Activated CD4-positive, alpha-beta T cell treated with anti-CD3 and anti-CD28 coated beads, Interleukin-2, amount 10 ng/mL, durations not matched to agents 24 days and 14 days (primary cell): ENCODE measurements at regions of chr3 and their contacts with region 1.

Region 1: DNA sequence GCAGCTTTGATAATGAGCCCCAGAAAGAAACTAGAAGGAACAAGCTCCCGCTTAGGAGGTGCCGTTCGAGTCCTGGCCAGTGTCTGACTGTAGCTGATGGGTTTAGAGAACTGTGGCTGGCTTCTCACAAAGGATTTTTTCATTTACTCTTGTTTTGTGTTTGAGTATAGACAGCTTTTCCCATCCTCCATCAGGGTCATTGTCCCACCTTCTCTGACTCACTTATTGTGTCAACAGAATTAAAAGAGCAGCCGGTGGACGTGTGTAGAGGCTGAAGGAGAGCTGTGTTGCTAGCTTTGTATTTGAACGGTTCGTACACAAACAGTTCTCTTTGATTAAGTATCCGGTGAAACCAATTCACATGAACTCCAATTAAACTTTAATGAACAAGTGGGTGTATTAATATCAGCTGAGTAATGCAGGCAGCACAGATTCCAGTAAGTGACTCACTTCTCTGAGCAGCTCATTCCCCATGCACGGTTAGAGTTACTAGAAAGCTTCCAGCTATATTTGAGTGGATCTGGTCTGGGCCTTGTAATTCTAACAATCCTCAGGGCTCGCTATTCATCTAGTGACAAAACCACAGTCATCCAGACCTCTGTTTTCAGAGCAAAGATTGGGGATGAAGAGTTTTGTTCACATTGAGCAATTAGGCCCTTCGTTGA is 141.0 kb downstream of the LPP start:
- DNase-seq: no peak
- H3K4me3 Mint-ChIP-seq: no peak overlapping the region
- H3K27ac Mint-ChIP-seq: no peak overlapping the region
- H3K4me1 Mint-ChIP-seq: peaks cover 71% of the 10 kb centered on the region
- H3K27me3 Mint-ChIP-seq: no peaks in the 10 kb centered on the region

Region 2: GRCh38 chr3:187679638-187680396 is 615.1 kb before region 1 on chr3:
- intact Hi-C with region 1: no loop called
- DNase-seq: peak; percentile 90
- H3K4me3 Mint-ChIP-seq: no peak overlapping the region
- H3K27ac Mint-ChIP-seq: no peak overlapping the region
- H3K4me1 Mint-ChIP-seq: peaks cover 7% of the 10 kb centered on the region
- H3K27me3 Mint-ChIP-seq: peaks cover 41% of the 10 kb centered on the region

Region 3: DNA sequence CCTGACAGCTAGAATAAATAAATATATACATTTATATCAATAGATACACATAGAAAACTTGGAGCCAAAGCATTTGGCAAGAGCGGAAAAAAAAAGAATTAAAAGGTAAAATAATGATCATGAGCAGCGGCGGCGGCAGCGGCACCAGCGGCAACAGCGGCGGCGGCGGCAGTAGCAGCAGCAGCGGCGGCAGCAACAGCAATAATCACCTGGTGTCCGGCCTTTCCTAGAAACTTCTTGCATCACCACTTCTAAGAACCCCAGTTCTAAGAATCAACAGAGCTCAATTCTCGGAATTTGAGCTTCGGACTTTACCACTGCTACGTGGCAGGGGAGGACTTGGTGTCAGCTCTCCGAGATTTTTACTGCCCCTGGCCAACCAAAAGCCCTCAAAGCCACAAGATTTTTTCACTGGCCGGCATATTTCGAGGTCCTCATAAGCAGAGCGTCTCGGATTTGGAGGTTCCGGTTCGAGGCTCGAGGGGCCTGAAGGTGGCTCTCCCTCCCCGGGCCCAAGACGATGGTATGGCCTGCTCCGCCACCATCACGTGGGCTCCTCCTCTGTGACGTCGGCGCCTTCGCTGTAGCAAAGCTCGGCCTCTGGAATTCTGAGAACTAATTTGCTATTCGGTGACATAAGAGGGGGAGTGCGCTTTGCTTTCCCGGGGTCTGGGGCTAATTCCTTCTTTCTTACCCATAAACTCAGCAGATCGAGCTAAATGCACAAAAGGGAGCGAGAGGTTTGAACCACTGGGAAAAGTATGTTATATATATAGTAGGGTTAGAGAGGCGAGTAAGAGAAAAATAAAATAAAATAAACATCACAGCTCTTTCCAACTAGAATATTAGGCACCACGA is 549.5 kb before region 1 on chr3 and contains the start of gene BCL6:
- intact Hi-C with region 1: loop called (anchors 1 kb)
- DNase-seq: peak; percentile 97
- H3K4me3 Mint-ChIP-seq: peak within 1 kb of the TSS; percentile 98
- H3K27ac Mint-ChIP-seq: peak within 1 kb of the TSS; percentile 99
- H3K4me1 Mint-ChIP-seq: peaks cover 61% of the 10 kb centered on the region
- H3K27me3 Mint-ChIP-seq: no peaks in the 10 kb centered on the region
- total RNA-seq, gene BCL6: 41.7 and 51.7 TPM in 2 replicates

Region 4: DNA sequence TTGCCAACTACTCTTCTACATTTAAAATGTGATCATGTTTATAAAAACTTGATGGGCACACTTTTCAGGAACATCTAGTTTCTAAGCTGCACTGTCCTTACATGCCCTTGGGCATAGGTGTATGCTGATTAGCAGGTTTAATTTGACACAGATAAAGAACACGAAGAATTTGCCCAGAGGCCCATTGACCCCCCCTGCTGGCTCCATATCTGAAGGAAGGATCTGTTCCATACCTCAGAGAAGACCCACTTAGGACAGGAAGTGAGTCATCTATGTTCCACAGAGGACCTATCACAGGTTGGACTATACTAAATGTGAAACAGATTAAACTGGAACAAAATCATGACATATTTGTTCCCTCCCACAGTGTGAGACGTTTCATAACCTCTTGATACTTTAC is 233.8 kb before region 1 on chr3:
- intact Hi-C with region 1: loop called (anchors 5 kb)
- DNase-seq: peak; percentile 85
- H3K4me3 Mint-ChIP-seq: peak overlapping the region; percentile 66
- H3K27ac Mint-ChIP-seq: peak overlapping the region; percentile 88
- H3K4me1 Mint-ChIP-seq: peaks cover 32% of the 10 kb centered on the region
- H3K27me3 Mint-ChIP-seq: no peaks in the 10 kb centered on the region

Region 5: DNA sequence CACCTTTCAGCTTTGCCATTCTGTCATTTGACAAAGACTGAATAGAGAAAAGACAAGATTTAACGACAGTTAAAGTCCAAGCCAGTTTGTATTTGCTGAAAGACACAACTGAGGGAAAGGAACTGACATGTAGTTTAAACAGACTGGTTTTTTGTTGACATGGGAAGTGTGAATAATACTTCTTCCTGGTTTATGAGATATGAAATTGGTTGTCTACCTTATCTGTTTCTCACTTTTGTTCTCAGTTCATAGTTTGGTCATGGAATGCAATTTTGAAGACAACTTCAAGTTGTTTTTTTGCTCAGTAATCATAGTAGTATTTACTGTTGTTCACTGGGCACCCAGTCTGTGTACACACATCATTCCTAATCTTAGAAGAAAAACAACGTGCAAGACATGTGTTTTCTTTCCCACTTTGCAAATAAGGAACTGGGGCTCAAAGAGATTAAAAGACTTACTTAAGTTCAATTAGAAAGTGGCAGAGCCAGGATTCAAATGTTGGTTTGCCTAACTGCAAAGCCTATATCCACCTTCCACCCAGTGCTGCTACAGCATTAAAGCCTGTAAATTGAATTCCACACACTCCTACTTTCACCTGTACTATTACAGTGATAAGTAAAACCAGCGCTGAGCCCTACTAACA is 37.5 kb before region 1 on chr3:
- intact Hi-C with region 1: loop called (anchors 1 kb)
- DNase-seq: no peak
- H3K4me3 Mint-ChIP-seq: no peak overlapping the region
- H3K27ac Mint-ChIP-seq: peak overlapping the region; percentile 85
- H3K4me1 Mint-ChIP-seq: peaks cover 47% of the 10 kb centered on the region
- H3K27me3 Mint-ChIP-seq: no peaks in the 10 kb centered on the region

Region 6: GRCh38 chr3:188320757-188321156 is 25.8 kb after region 1 on chr3:
- intact Hi-C with region 1: loop called (anchors 1 kb)
- DNase-seq: no peak
- H3K4me3 Mint-ChIP-seq: no peak overlapping the region
- H3K27ac Mint-ChIP-seq: peak overlapping the region; percentile 29
- H3K4me1 Mint-ChIP-seq: peaks cover 48% of the 10 kb centered on the region
- H3K27me3 Mint-ChIP-seq: peaks cover 4% of the 10 kb centered on the region

Region 7: DNA sequence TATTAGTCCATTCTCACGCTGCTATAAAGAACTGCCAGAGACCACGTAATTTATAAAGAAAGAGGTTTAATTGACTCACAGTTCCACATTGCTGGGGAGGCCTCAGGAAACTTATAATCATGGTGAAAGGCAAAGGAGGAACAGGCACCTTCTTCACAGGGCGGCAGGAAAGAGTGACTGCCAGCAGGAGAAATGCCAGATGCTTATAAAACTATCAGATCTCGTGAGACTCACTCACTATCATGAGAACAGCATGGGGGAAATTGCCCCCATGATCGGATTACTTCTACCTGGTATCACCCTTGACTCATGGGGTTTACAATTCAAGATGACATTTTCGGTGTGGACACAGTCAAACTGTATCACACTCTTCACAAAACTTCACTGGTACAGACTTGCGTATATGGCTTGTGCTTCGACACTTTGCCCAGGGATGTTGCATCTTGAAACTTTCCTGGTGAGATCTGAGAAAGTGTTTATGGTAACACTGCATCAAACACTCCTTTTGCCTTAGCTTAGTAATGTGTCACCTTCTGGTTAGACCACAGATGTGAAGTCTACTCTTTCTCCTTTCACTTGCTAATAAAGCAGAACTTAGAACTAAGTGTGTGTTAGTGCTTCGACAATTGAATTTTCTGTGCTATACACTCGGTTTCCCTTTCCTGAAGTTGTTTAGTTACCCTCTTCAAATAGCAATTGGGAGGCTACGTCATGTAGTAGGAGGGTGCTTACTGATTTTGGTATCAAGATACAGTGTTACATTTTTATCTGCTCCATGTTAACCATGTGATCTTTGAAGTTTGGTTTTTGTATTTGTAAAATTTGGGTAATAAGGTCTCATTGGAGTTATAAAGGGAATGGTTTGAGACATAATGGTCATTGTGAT is 44.7 kb after region 1 on chr3:
- intact Hi-C with region 1: loop called (anchors 2 kb)
- DNase-seq: peak; percentile 81
- H3K4me3 Mint-ChIP-seq: peak overlapping the region; percentile 66
- H3K27ac Mint-ChIP-seq: peak overlapping the region; percentile 93
- H3K4me1 Mint-ChIP-seq: peaks cover 34% of the 10 kb centered on the region
- H3K27me3 Mint-ChIP-seq: peaks cover 6% of the 10 kb centered on the region

Region 8: DNA sequence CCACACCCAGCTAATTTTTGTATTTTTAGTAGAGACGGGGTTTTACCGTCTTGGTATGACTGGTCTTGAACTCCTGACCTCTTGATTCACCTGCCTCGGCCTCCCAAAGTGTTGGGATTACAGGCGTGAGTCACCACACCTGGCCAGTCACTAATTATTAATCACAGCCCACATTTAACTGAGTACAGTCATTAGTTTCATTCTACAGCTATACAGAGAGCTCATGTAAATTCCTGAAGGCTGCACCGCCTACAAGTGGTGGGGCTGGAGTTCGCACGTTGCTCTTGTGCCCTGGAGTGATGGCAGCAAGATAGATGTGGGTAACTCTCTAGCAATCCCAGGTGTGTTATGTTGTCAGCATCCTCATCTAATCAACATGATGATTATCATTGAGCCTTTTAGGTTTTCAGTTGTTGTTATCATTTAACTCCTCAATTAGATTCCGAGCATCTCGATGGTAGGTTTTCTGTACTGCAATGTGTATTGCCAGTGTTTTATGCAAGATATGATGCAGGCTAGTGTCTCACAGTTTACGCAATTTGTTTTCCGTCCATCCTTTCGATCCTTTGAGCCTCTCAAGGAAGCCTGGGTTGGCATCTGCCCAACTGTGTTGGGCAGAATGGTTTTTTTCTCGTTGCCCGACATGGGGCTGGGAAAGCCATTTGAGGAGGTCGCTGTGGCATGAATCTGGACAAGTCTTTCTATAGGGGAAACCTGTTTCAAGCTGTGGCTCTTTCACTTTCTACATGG is 75.3 kb after region 1 on chr3:
- intact Hi-C with region 1: no loop called
- DNase-seq: no peak
- H3K4me3 Mint-ChIP-seq: no peak overlapping the region
- H3K27ac Mint-ChIP-seq: no peak overlapping the region
- H3K4me1 Mint-ChIP-seq: peaks cover 4% of the 10 kb centered on the region
- H3K27me3 Mint-ChIP-seq: no peaks in the 10 kb centered on the region

Region 9: GRCh38 chr3:188954590-188955208 is 659.7 kb after region 1 on chr3:
- intact Hi-C with region 1: loop called (anchors 5 kb)
- DNase-seq: peak; percentile 94
- H3K4me3 Mint-ChIP-seq: no peak overlapping the region
- H3K27ac Mint-ChIP-seq: peak overlapping the region; percentile 10
- H3K4me1 Mint-ChIP-seq: peaks cover 27% of the 10 kb centered on the region
- H3K27me3 Mint-ChIP-seq: peaks cover 6% of the 10 kb centered on the region